MCF 10A (cell line): ENCODE measurements at regions of chr1 and their contacts with region 1.

Region 1: GRCh38 chr1:8077120-8077573 is 51.0 kb upstream of the ERRFI1 start:
- DNase-seq: peak; percentile 91
- H3K4me3 Mint-ChIP-seq: no peak overlapping the region
- H3K27ac Mint-ChIP-seq: peak overlapping the region; percentile 89
- H3K4me1 Mint-ChIP-seq: peaks cover 59% of the 10 kb centered on the region
- H3K27me3 Mint-ChIP-seq: no peaks in the 10 kb centered on the region
- CTCF ChIP-seq: no peak

Region 2: DNA sequence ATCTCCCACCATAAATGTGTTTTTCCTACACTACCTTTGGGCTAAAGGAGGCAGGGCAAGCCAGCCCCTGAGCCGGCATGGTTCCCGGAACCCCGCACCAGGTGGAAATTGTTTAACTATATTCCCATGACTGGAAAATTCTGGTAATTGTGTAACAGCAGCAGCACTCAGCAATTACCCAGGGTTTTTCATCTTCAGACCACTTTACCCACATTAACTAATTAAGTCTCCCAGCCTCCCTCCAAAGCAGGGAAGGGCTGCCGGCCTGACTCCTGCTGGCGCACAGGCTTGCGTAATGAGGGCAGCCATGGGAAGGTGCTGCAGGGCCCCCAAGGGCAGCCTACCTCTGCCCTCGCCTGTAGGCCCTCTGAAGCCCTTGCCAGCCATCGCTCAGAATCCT is 446.8 kb before region 1 on chr1:
- CTCF ChIA-PET with region 1: no interaction called
- POLR2A ChIA-PET with region 1: no interaction called
- intact Hi-C with region 1: no loop called
- DNase-seq: no peak
- H3K4me3 Mint-ChIP-seq: no peak overlapping the region
- H3K27ac Mint-ChIP-seq: no peak overlapping the region
- H3K4me1 Mint-ChIP-seq: no peaks in the 10 kb centered on the region
- H3K27me3 Mint-ChIP-seq: peaks cover 90% of the 10 kb centered on the region
- CTCF ChIP-seq: no peak

Region 3: GRCh38 chr1:8015036-8015808 is 61.9 kb before region 1 on chr1:
- CTCF ChIA-PET with region 1: interaction called, 3 read pairs
- POLR2A ChIA-PET with region 1: interaction called, 103 read pairs
- intact Hi-C with region 1: no loop called
- DNase-seq: peak; percentile 82
- H3K4me3 Mint-ChIP-seq: peak overlapping the region; percentile 88
- H3K27ac Mint-ChIP-seq: peak overlapping the region; percentile 82
- H3K4me1 Mint-ChIP-seq: peaks cover 73% of the 10 kb centered on the region
- H3K27me3 Mint-ChIP-seq: no peaks in the 10 kb centered on the region
- CTCF ChIP-seq: peak; percentile 64

Region 4: GRCh38 chr1:8061210-8061609 is 15.9 kb before region 1 on chr1:
- CTCF ChIA-PET with region 1: no interaction called
- POLR2A ChIA-PET with region 1: interaction called, 14 read pairs
- intact Hi-C with region 1: no loop called
- DNase-seq: peak; percentile 89
- H3K4me3 Mint-ChIP-seq: no peak overlapping the region
- H3K27ac Mint-ChIP-seq: peak overlapping the region; percentile 88
- H3K4me1 Mint-ChIP-seq: peaks cover 23% of the 10 kb centered on the region
- H3K27me3 Mint-ChIP-seq: no peaks in the 10 kb centered on the region
- CTCF ChIP-seq: no peak

Region 5: GRCh38 chr1:8121261-8122170 is 44.4 kb after region 1 on chr1:
- CTCF ChIA-PET with region 1: interaction called, 4 read pairs
- POLR2A ChIA-PET with region 1: interaction called, 10 read pairs
- intact Hi-C with region 1: no loop called
- DNase-seq: peak; percentile 93
- H3K4me3 Mint-ChIP-seq: peak overlapping the region; percentile 35
- H3K27ac Mint-ChIP-seq: peak overlapping the region; percentile 92
- H3K4me1 Mint-ChIP-seq: peaks cover 31% of the 10 kb centered on the region
- H3K27me3 Mint-ChIP-seq: no peaks in the 10 kb centered on the region
- CTCF ChIP-seq: no peak

Region 6: GRCh38 chr1:8174807-8175206 is 97.7 kb after region 1 on chr1:
- CTCF ChIA-PET with region 1: interaction called, 3 read pairs
- POLR2A ChIA-PET with region 1: interaction called, 10 read pairs
- intact Hi-C with region 1: no loop called
- DNase-seq: peak; percentile 75
- H3K4me3 Mint-ChIP-seq: no peak overlapping the region
- H3K27ac Mint-ChIP-seq: peak overlapping the region; percentile 93
- H3K4me1 Mint-ChIP-seq: peaks cover 14% of the 10 kb centered on the region
- H3K27me3 Mint-ChIP-seq: no peaks in the 10 kb centered on the region
- CTCF ChIP-seq: no peak

Region 7: DNA sequence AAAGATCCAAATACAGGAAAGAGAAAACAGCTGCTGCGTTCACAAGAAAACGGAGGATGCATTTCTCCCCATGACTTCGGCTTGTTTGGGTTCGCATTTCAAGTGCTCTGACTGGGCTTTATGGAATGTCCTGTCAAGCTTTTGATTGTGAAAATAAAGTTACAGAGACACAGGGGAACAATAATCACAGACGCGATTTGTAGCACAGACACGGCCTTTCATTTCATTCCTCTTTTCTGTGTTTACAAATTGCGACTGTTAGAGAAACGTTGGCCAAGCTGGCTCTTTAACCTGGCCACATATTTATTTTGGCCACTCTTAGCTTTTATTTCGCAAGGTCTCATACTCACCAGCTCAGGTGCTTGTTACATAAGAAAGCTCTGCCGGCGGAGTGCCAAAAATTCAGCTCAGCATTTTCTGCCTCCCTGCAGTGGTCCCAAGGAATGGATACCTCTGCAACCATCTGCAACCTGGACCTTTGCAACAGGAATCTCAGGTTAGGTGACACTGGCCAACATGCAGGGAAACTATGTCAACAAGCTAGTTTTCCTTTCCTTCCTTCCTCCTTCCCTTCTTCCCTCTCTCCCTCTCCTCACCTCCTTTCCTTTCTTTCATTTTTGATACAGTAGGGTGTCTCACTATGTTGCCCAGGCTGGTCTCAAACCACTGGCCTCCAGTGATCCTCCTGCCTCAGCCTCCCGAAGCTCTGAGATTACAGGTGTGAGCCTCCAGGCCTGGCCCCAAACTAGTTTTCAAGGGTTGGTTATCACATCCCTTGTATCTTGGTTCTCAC is 182.5 kb after region 1 on chr1:
- CTCF ChIA-PET with region 1: no interaction called
- POLR2A ChIA-PET with region 1: interaction called, 17 read pairs
- intact Hi-C with region 1: no loop called
- DNase-seq: peak; percentile 93
- H3K4me3 Mint-ChIP-seq: peak overlapping the region; percentile 59
- H3K27ac Mint-ChIP-seq: peak overlapping the region; percentile 98
- H3K4me1 Mint-ChIP-seq: peaks cover 38% of the 10 kb centered on the region
- H3K27me3 Mint-ChIP-seq: no peaks in the 10 kb centered on the region
- CTCF ChIP-seq: no peak